ENCODE measurements at regions of chr2 and their contacts with region 1.

Region 1: GRCh38 chr2:240143801-240144648 is 3.6 kb upstream of the OTOS start:
- DNase-seq: no peak
- H3K4me3 ChIP-seq: no peak overlapping the region
- H3K27me3 ChIP-seq: peaks cover 3% of the 10 kb centered on the region
- CTCF ChIP-seq: peak; percentile 94

Region 2: GRCh38 chr2:240060977-240061591 is 82.9 kb before region 1 on chr2:
- CTCF ChIA-PET with region 1: interaction called, 175 read pairs
- POLR2A ChIA-PET with region 1: no interaction called
- DNase-seq: peak; percentile 4
- H3K4me3 ChIP-seq: no peak overlapping the region
- H3K27me3 ChIP-seq: peaks cover 3% of the 10 kb centered on the region
- CTCF ChIP-seq: peak; percentile 64

Region 3: GRCh38 chr2:240066487-240066886 is 77.5 kb before region 1 on chr2:
- CTCF ChIA-PET with region 1: interaction called, 175 read pairs
- POLR2A ChIA-PET with region 1: no interaction called
- DNase-seq: no peak
- H3K4me3 ChIP-seq: no peak overlapping the region
- H3K27me3 ChIP-seq: peaks cover 3% of the 10 kb centered on the region
- CTCF ChIP-seq: no peak

Region 4: DNA sequence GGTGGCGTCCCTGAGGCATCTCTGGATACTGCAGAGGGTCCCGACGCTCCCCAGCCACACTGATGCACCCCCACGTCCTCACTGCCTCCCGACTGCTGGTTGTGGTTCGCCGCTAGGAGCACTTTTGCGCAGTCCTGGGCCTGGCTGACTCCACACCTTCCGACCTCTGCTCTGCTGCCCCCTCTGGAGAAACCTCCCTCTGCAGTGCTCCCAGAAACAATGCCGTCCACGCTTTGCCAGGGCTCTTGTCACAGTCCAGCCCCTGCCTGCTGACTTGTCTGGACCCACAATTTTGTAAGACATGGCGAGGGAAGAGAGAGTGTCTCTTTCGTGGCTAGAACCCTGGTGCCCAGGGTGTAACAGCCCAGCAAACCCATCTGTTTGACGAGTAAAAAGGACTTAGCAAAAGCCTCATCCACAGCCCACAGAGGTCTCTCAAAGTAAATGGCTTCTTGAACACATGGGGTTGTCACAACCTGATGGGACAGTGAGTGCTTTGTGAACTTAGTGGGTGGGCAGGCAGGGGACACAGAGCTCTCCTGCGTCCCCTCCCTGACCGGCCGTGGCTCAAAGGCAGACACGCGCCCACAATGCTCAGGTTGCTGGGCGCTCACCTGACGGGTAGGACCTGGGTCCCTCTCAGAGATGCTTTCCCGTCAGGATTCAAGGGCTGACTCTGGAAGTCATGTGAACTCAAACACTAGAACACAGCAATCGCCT is 11.9 kb before region 1 on chr2:
- CTCF ChIA-PET with region 1: interaction called, 11 read pairs
- POLR2A ChIA-PET with region 1: no interaction called
- DNase-seq: no peak
- H3K4me3 ChIP-seq: no peak overlapping the region
- H3K27me3 ChIP-seq: no peaks in the 10 kb centered on the region
- CTCF ChIP-seq: peak; percentile 16; the same call in 1 of the 2 replicates

Region 5: DNA sequence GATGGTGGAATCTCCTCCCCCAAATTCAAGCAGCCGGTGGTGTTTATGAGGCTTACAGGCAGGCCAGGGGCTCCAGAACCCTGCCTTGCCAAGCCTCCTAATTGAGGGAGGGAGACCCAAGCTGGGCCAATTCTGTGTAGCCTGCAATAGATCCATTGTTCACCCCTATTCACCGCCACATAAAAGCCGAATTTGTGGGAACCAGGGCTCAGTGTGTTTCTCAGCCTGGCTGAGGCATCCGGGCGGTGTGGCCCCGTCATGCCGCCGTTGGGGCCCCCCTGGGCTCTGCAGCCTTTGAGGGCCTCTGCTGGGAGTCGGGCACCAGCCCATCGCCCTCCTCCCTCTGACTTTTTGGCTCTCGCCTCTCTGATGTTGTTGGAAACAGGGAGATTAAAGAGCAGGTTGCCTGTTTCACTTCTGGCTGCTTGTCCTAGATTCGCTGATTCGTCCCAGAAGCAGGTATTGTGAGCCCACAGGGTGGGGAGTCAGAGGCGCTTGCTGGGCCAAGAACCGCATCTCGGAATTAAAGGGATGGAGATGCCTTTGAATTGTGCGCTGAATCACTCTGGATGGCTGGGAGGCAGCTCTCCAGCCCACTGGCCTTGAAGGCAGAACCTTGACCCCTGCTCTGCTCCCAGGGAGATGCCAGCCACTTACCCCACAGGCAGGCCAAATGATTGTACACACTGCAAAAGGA is 11.2 kb after region 1 on chr2:
- CTCF ChIA-PET with region 1: interaction called, 14 read pairs
- POLR2A ChIA-PET with region 1: no interaction called
- DNase-seq: no peak
- H3K4me3 ChIP-seq: no peak overlapping the region
- H3K27me3 ChIP-seq: peaks cover 4% of the 10 kb centered on the region
- CTCF ChIP-seq: no peak

Measured in BJ (cell line).